ENCODE measurements at regions of chr4 and their contacts with region 1.

Region 1: DNA sequence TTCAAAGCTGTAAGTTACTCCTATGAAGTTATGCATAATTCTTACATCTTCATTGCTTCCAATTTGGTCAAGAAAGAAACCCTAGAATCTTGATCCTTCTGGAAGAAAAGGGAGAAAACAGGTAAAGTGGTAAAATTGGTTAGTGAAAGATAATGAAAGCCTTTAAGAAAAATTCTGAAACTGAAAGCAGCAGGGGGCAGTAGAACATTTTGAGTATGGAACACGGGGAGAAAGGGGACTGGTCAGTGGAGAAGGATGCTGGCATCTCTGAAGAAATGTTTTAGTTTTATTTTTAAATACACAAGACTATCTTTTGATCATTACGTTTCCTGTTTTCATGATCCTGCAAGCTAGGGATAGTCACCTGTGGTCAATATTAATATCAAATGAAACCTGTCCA is 54.3 kb downstream of the SLIT2 start:
- DNase-seq: peak; percentile 74
- H3K4me3 ChIP-seq: no peak overlapping the region
- H3K27ac ChIP-seq: peak overlapping the region; percentile 63
- H3K4me1 ChIP-seq: peaks cover 26% of the 10 kb centered on the region
- H3K27me3 ChIP-seq: no peaks in the 10 kb centered on the region
- CTCF ChIP-seq: peak; percentile 57

Region 2: GRCh38 chr4:19063662-19064061 is 1242.3 kb before region 1 on chr4:
- CTCF ChIA-PET with region 1: no interaction called
- POLR2A ChIA-PET with region 1: no interaction called
- intact Hi-C with region 1: no loop called
- DNase-seq: no peak
- H3K4me3 ChIP-seq: no peak overlapping the region
- H3K27ac ChIP-seq: no peak overlapping the region
- H3K4me1 ChIP-seq: no peaks in the 10 kb centered on the region
- H3K27me3 ChIP-seq: no peaks in the 10 kb centered on the region
- CTCF ChIP-seq: no peak

Region 3: GRCh38 chr4:20203508-20203907 is 102.5 kb before region 1 on chr4:
- CTCF ChIA-PET with region 1: no interaction called
- POLR2A ChIA-PET with region 1: no interaction called
- intact Hi-C with region 1: no loop called
- DNase-seq: peak; percentile 77
- H3K4me3 ChIP-seq: no peak overlapping the region
- H3K27ac ChIP-seq: no peak overlapping the region
- H3K4me1 ChIP-seq: peaks cover 13% of the 10 kb centered on the region
- H3K27me3 ChIP-seq: no peaks in the 10 kb centered on the region
- CTCF ChIP-seq: no peak

Region 4: GRCh38 chr4:20354120-20354519 is 48.1 kb after region 1 on chr4:
- CTCF ChIA-PET with region 1: no interaction called
- POLR2A ChIA-PET with region 1: no interaction called
- intact Hi-C with region 1: loop called (anchors 2 kb)
- DNase-seq: peak; percentile 91
- H3K4me3 ChIP-seq: no peak overlapping the region
- H3K27ac ChIP-seq: peak overlapping the region; percentile 53
- H3K4me1 ChIP-seq: peaks cover 54% of the 10 kb centered on the region
- H3K27me3 ChIP-seq: no peaks in the 10 kb centered on the region
- CTCF ChIP-seq: peak; percentile 30; the same call in 1 of the 2 replicates